CD14-positive monocyte (primary cell): ENCODE measurements at regions of chr9 and their contacts with region 1.

Region 1: DNA sequence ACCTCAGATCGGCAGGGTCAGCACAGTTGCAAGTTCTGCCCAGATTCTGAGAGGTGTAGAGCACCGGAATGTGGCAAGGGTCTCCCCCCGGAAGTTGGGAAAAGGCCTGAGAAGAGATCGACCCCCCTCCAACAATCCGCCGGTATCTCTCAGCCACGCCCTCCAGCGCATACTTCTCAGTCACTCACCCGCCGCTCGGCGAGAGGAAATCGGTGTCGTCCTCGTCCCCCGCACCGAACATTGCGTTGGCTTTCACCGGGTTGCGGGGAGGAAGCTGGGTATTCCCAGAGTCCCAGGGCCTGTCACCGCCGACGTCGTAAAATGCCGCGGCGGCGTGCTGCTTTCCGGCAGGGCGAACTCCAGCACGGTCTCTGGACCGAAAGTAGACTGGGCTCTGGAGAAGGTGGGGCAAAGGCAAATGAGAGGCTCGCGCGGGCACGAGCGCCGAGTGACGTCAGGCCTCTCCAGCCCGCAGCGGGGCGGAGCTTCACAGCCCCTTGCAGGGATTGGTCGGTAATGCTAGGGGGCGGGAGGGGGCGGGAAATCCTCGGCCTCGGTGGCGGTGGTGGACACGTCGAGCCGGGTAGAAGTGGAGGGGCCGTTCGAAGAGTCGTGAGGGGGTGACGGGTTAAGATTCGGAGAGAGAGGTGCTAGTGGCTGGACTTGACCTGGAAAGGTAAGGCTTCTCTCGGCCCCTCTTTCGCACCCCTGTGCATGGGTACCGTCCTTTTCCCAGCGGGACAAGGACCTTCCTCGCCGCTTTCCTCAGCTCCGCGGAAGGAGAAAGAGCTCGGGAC is at the starts of genes FKBP15 and SLC31A1:
- DNase-seq: peak; percentile 98 to 99 (median 98)
- H3K4me3 ChIP-seq: peak within 1 kb of the TSS; percentile 86 to 98 (median 95)
- H3K4me3 Mint-ChIP-seq: peak within 1 kb of the TSS; percentile 93 to 94
- H3K27ac ChIP-seq: peak within 1 kb of the TSS; percentile 87 to 94
- H3K27ac Mint-ChIP-seq: peak within 1 kb of the TSS; percentile 91 to 99 (median 94)
- H3K4me1 ChIP-seq: peaks cover 52 to 64% of the 10 kb centered on the region in 2 donors
- H3K4me1 Mint-ChIP-seq: peaks cover 61% of the 10 kb centered on the region
- H3K27me3 ChIP-seq: no peaks in the 10 kb centered on the region
- H3K27me3 Mint-ChIP-seq: no peaks in the 10 kb centered on the region
- CTCF ChIP-seq: no peak
- polyA plus RNA-seq, gene FKBP15: 32.3 to 120 (median 55.7) TPM
- polyA plus RNA-seq, gene SLC31A1: 20.4 to 49.0 (median 38.8) TPM

Region 2: DNA sequence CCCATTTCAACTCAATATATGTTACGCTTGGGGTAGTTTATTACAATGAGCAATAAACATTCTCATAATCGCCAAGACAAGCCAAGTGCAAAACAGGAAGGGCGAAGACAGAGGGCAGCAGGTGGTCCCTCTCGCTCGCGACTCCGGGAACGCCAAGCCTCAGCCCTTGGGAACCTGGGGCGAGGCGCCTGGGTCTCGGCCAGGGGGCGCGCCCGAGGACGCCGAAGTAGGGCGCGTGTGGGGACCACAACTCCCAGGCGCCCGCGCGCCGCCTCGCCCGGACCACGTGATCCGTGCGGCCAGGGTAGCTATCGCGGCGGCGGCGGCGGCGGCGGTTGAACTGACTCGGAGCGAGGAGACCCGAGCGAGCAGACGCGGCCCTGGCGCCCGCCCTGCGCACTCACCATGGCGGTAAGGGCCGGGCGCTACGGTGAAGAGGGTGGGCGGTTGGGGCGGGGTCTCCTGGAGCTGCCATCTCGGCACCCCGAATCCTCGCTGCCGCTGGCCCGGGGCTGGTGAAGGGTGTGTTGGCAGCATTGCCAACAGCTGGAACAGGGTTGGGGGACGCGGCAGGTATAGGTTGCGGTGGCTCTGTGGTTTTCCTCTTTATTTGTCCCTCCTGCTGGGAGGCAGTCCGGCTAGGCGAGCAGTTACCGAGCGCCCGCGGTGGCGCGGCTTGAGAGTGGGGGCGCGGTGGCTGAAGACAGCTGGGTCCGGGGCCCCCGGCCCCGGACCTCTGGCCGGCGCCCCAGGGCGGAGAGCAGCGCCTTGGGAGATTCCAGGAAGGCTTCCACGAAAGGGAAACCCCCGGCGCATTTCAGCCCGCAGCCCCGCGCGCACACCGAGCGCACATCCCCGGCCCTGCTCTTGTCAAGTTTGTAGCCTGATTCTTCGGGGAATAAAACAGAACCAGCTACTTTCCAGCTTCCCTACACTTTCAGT is 70.3 kb before region 1 on chr9 and contains the start of gene SLC31A2:
- intact Hi-C with region 1: loop called (anchors 2 kb)
- DNase-seq: peak; percentile 75 to 89 (median 88)
- H3K4me3 ChIP-seq: peak within 1 kb of the TSS; percentile 75 to 97 (median 93)
- H3K4me3 Mint-ChIP-seq: peak within 1 kb of the TSS; percentile 94 to 96
- H3K27ac ChIP-seq: peak within 1 kb of the TSS; percentile 96 to 98
- H3K27ac Mint-ChIP-seq: peak within 1 kb of the TSS; percentile 96 to 100 (median 99)
- H3K4me1 ChIP-seq: peaks cover 66 to 67% of the 10 kb centered on the region in 2 donors
- H3K4me1 Mint-ChIP-seq: peaks cover 66% of the 10 kb centered on the region
- H3K27me3 ChIP-seq: no peaks in the 10 kb centered on the region
- H3K27me3 Mint-ChIP-seq: peaks cover 1 to 5% (median 3%) of the 10 kb centered on the region in 3 donors
- CTCF ChIP-seq: peak; percentile 47
- polyA plus RNA-seq, gene SLC31A2: 82.9 to 247 (median 188) TPM

Region 3: GRCh38 chr9:113187935-113188595 is 33.1 kb before region 1 on chr9:
- intact Hi-C with region 1: loop called in 1 of 2 experiments (anchors 2 kb)
- DNase-seq: peak; percentile 94 to 98 (median 97)
- H3K4me3 ChIP-seq: peak overlapping the region; percentile 40 to 75 (median 70)
- H3K4me3 Mint-ChIP-seq: peak overlapping the region; percentile 69 to 86
- H3K27ac ChIP-seq: peak overlapping the region; percentile 82 to 92
- H3K27ac Mint-ChIP-seq: peak overlapping the region; percentile 95 to 99 (median 98)
- H3K4me1 ChIP-seq: peaks cover 42 to 56% of the 10 kb centered on the region in 2 donors
- H3K4me1 Mint-ChIP-seq: peaks cover 56% of the 10 kb centered on the region
- H3K27me3 ChIP-seq: no peaks in the 10 kb centered on the region
- H3K27me3 Mint-ChIP-seq: no peaks in the 10 kb centered on the region
- CTCF ChIP-seq: no peak

Region 4: DNA sequence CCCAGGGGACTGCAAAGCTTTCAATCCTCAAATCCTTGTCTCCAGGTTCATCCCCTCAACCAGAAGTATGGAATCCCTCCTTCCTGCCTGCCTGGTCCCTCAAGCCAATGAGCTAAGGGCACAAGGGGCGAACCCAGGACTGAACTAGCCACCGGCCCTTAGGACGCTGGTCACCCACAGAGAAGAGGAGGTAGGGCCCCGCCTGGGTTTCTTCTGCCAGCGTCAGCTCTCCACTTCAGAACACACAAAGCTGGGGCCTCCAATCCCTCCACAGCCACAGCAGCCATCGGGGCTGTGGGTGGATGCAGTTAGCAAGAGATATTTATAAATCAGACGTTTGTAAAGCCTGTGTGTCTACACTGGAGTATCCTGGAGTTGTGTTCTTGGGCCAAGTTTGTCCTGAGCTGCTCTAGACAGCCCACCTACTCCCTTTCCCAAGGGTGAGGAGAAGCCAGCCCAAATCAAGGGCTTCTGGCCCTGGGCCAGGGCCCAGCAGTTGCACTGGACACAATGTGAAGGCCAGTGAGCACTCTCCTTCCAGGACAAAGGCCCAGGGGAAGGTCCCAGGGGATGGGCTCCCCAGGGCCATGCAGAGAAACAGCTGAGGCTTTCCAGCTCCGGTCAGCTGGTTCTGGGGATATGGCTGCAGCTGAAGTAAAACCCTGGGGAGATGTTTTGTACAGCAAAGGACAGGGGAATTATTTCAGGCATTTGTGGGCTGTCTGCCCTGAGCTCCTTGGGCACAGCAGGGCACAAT is 838.0 kb after region 1 on chr9:
- intact Hi-C with region 1: no loop called
- DNase-seq: no peak
- H3K4me3 ChIP-seq: no peak overlapping the region
- H3K4me3 Mint-ChIP-seq: no peak overlapping the region
- H3K27ac ChIP-seq: no peak overlapping the region
- H3K27ac Mint-ChIP-seq: no peak overlapping the region
- H3K4me1 ChIP-seq: no peaks in the 10 kb centered on the region
- H3K4me1 Mint-ChIP-seq: peaks cover 3% of the 10 kb centered on the region
- H3K27me3 ChIP-seq: peaks cover 0 to 3% of the 10 kb centered on the region in 2 donors
- H3K27me3 Mint-ChIP-seq: peaks cover 3 to 10% (median 5%) of the 10 kb centered on the region in 3 donors
- CTCF ChIP-seq: no peak